ENCODE measurements at regions of chr6 and their contacts with region 1.

Region 1: GRCh38 chr6:11496152-11497060 is 41.1 kb upstream of the TMEM170B start:
- DNase-seq: peak; percentile 39
- H3K4me3 ChIP-seq: no peak overlapping the region
- H3K27me3 ChIP-seq: no peaks in the 10 kb centered on the region
- CTCF ChIP-seq: peak; percentile 77

Region 2: GRCh38 chr6:10954590-10955010 is 541.8 kb before region 1 on chr6:
- CTCF ChIA-PET with region 1: interaction called, 32 read pairs
- POLR2A ChIA-PET with region 1: no interaction called
- DNase-seq: no peak
- H3K4me3 ChIP-seq: no peak overlapping the region
- H3K27me3 ChIP-seq: no peaks in the 10 kb centered on the region
- CTCF ChIP-seq: peak; percentile 89

Region 3: DNA sequence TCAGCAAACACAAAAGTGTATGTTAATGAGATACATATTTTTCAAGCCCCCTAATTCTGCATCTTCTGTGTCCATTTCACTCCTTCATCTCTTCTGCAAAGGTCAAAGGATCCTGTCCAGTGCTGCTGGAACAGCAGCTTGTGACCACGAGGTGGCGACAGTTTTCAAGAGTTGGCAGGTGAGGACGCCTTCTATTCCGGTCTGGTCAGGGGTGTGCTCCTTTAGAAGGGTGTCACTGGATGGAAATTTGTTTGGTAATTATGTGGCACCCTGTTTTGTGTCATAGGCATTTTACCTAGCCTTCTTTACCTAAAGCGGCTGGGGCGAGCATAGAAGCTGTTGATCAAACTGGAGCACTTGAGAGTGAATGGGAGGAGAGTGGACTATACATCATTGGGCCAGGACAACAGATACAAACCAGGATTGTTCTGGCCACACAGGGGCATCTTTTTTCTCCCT is 352.0 kb before region 1 on chr6:
- CTCF ChIA-PET with region 1: interaction called, 45 read pairs
- POLR2A ChIA-PET with region 1: no interaction called
- DNase-seq: no peak
- H3K4me3 ChIP-seq: no peak overlapping the region
- H3K27me3 ChIP-seq: no peaks in the 10 kb centered on the region
- CTCF ChIP-seq: peak; percentile 88

Region 4: GRCh38 chr6:11232193-11232769 is 264.1 kb before region 1 on chr6 and contains the start of gene NEDD9:
- CTCF ChIA-PET with region 1: interaction called, 14 read pairs
- POLR2A ChIA-PET with region 1: interaction called, 6 read pairs
- DNase-seq: peak; percentile 86
- H3K4me3 ChIP-seq: peak within 1 kb of the TSS; percentile 68
- H3K27me3 ChIP-seq: no peaks in the 10 kb centered on the region
- CTCF ChIP-seq: no peak
- polyA plus RNA-seq, gene NEDD9: 21.3 and 25.6 TPM in 2 replicates

Region 5: DNA sequence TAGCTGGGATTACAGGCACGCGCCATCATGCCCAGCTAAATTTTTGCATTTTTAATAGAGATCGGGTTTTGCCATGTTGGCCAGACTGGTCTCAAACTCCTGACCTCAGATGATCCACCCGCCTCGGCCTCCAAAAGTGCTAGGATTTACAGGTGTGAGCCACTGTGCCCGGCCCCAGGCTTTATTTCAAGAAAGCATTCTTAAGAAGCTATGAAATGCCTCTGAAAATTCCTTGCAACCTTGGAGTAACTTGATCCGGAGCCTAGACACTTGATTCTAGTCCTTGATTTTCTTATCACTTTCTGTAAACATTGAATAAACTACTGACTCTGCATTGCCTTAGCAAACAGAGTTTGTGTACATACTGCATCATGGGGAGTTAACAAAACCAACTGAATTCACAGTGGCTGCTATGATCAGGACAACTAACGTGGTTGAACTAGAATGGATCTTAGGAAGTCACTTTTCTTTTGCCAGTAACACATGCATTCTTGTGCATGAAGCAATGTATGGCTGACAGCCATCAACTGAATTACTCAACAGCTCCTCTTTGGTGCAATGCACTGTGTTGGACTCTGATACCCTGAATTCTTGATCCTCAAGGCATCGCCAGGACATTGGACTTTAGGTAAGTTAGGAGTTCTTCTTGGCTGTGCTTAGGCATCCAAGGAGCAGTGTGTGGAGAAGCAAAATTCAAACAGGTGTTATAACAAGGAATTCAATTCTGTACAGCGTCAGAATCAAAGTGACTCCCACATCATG is 61.7 kb before region 1 on chr6:
- CTCF ChIA-PET with region 1: interaction called, 20 read pairs
- POLR2A ChIA-PET with region 1: no interaction called
- DNase-seq: no peak
- H3K4me3 ChIP-seq: no peak overlapping the region
- H3K27me3 ChIP-seq: no peaks in the 10 kb centered on the region
- CTCF ChIP-seq: no peak

Region 6: DNA sequence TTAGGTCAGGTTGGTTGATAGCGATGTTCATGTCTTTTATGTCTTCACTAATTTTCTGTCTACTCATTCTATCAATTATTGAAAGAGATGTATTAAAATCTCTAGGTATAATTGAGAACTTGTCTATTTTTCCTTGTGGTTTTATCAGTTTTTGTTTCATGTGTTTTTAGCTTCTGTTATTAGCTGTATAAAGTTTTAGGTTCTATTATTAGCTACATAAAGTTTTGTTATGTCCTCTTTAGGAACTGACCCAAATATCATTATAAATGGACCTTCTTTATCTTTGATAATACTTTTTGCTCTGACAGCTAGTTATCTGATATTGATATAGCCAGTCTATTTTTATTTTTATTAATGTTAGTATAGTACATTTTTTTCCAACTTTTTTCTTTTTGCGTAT is 51.3 kb before region 1 on chr6:
- CTCF ChIA-PET with region 1: no interaction called
- POLR2A ChIA-PET with region 1: no interaction called
- DNase-seq: no peak
- H3K4me3 ChIP-seq: no peak overlapping the region
- H3K27me3 ChIP-seq: no peaks in the 10 kb centered on the region
- CTCF ChIP-seq: no peak

Region 7: DNA sequence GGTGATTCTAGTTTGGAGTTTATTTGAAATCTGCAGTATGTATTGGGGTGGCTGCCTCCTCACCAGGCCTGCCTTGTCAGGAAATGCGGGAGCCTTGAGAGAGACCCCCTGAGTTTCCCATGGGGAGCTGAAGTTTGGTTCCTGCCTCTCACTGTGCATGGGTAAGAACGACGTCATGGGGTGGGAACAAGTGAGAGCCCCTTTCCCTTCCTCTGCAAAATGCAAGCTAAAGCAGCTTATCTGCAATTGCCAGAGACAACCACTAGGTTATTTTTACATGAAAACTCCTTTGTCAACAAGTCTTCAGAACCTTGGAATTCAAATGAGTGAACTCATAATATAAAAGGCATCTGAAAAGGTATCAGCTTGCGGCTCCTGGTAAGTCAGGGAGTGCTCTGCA is 99.5 kb after region 1 on chr6:
- CTCF ChIA-PET with region 1: no interaction called
- POLR2A ChIA-PET with region 1: no interaction called
- DNase-seq: no peak
- H3K4me3 ChIP-seq: no peak overlapping the region
- H3K27me3 ChIP-seq: no peaks in the 10 kb centered on the region
- CTCF ChIP-seq: 0 out of 2 replicates have a peak, but pooled peaks have one; percentile 14